ENCODE measurements at regions of chr6 and their contacts with region 1.

Region 1: DNA sequence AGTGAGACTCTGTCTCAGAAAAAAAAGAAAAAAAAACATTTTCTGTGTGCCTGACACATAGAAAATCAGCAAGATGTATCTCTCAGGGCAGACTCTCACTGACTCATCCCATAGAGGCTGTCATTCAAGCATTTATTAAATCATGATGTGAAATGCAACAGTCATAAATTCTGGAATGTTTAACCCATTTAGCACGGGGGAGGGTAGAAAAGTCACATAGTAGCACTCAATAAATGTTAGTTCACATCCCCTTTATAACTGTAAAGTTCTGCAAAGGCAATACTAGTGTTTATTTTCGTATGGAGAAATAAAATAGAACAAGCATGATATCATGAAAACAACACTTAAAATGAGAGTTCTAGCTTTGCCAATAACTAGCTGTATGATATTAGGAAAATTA is 15.5 kb upstream of the CARMIL1 start:
- DNase-seq: no peak
- ATAC-seq: no peak
- H3K4me3 Mint-ChIP-seq: no peak overlapping the region
- H3K27ac Mint-ChIP-seq: no peak overlapping the region
- H3K4me1 Mint-ChIP-seq: no peaks in the 10 kb centered on the region
- H3K27me3 Mint-ChIP-seq: peaks cover 6% of the 10 kb centered on the region

Region 2: DNA sequence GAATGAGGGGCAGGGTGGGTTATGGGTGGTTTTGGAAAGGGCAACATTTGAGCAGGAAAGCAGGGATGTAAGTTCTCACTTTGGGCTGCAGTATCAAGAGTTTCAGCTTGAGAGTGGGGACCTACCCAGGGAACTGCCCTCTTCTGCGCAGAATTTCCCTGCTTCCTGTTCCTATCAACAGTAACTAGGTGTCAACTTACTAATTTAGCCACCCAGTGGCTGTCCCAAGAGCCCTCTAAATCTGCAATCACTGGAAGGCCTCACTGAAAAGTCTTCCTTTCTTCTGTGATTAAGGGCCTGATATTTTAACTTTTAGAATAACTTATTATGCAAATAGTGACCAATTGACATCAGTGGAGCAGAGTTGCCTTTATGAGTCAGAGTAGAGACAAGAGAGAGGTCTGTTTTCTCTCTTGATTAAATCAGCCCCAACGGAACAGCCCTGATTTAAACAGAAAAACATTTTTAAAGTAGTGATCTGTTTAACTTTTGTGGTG is 209.7 kb before region 1 on chr6:
- CTCF ChIA-PET with region 1: no interaction called
- POLR2A ChIA-PET with region 1: no interaction called
- DNase-seq: no peak
- ATAC-seq: no peak
- H3K4me3 Mint-ChIP-seq: no peak overlapping the region
- H3K27ac Mint-ChIP-seq: peak overlapping the region; percentile 44
- H3K4me1 Mint-ChIP-seq: peaks cover 89% of the 10 kb centered on the region
- H3K27me3 Mint-ChIP-seq: no peaks in the 10 kb centered on the region

Region 3: GRCh38 chr6:25223490-25223991 is 40.1 kb before region 1 on chr6:
- CTCF ChIA-PET with region 1: interaction called, 16 read pairs
- POLR2A ChIA-PET with region 1: interaction called, 3 read pairs
- DNase-seq: peak; percentile 75
- ATAC-seq: peak; percentile 49
- H3K4me3 Mint-ChIP-seq: peak overlapping the region; percentile 52
- H3K27ac Mint-ChIP-seq: no peak overlapping the region
- H3K4me1 Mint-ChIP-seq: peaks cover 13% of the 10 kb centered on the region
- H3K27me3 Mint-ChIP-seq: peaks cover 10% of the 10 kb centered on the region

Region 4: DNA sequence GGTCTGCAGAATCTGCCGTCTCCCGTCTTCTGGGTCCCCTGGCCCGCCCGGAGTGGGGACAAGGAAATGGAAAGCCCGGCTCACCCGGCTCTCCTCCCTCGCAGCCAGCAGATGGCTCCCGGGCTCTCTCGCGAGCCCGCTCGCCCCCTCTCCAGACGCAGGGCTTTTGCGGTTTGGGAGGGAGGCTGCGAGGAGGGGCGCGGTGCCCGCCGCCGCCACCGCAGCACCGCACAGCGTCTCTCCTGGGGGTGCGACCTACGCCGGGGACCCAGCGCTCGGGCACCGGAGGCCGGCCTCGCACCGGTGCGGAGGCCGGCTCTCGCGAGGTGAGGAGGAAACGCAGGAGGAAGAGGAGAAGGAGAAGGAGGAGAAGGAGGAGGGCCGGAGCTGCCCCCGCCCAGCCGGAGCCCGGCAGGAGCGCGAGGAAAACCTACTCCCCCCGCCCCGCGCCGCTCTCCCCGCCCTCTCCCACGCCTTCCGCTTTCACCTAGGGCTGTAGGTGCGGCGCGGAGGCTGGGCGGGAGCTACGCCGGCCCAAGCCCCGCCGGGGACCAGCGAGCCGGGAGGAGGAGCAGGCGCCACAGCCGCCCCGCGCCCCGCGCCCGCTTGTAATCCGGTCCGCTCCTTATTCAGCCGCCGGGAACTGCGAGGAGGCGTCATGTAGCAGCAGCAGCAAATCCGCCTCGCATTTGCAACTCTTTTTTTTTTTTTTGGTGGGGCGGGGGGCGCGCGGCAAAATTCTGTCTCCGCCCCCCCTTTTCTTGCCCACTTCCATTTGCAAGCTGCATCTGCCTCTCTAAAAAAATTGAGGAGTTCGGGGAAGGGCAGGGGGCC is 15.5 kb after region 1 on chr6 and contains the start of gene CARMIL1:
- CTCF ChIA-PET with region 1: interaction called, 65 read pairs
- POLR2A ChIA-PET with region 1: no interaction called
- DNase-seq: peak; percentile 82
- ATAC-seq: peak; percentile 91
- H3K4me3 Mint-ChIP-seq: peak within 1 kb of the TSS; percentile 76
- H3K27ac Mint-ChIP-seq: peak within 1 kb of the TSS; percentile 48
- H3K4me1 Mint-ChIP-seq: peaks cover 20% of the 10 kb centered on the region
- H3K27me3 Mint-ChIP-seq: peaks cover 6% of the 10 kb centered on the region
- total RNA-seq, gene CARMIL1: 4.6 to 4.8 TPM

Region 5: GRCh38 chr6:25312703-25313501 is 49.2 kb after region 1 on chr6:
- CTCF ChIA-PET with region 1: interaction called, 14 read pairs
- POLR2A ChIA-PET with region 1: no interaction called
- DNase-seq: no peak
- ATAC-seq: no peak
- H3K4me3 Mint-ChIP-seq: no peak overlapping the region
- H3K27ac Mint-ChIP-seq: no peak overlapping the region
- H3K4me1 Mint-ChIP-seq: peaks cover 12% of the 10 kb centered on the region
- H3K27me3 Mint-ChIP-seq: no peaks in the 10 kb centered on the region

Region 6: GRCh38 chr6:25497383-25498040 is 233.9 kb after region 1 on chr6:
- CTCF ChIA-PET with region 1: interaction called, 116 read pairs
- POLR2A ChIA-PET with region 1: no interaction called
- DNase-seq: no peak
- ATAC-seq: no peak
- H3K4me3 Mint-ChIP-seq: no peak overlapping the region
- H3K27ac Mint-ChIP-seq: no peak overlapping the region
- H3K4me1 Mint-ChIP-seq: no peaks in the 10 kb centered on the region
- H3K27me3 Mint-ChIP-seq: no peaks in the 10 kb centered on the region

Region 7: DNA sequence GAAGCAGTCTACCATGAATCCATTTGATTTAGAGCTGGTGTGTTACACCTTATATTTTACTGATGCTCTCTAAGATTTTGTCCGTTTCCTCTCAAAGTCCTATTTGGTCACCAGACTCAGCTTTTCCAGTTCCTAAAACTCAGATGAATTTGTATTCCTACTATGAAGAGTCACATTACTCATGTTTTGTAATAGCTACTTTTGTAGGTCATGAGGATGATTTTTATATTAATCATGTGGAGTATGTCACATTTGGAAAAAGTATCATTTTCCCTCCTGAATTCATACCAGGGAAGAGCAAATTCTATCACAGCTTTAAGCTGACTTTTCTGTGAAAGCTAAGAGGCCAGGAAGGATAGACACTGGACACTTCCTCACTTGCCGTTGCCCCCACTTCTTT is 247.7 kb after region 1 on chr6:
- CTCF ChIA-PET with region 1: interaction called, 10 read pairs
- POLR2A ChIA-PET with region 1: interaction called, 3 read pairs
- DNase-seq: no peak
- ATAC-seq: no peak
- H3K4me3 Mint-ChIP-seq: no peak overlapping the region
- H3K27ac Mint-ChIP-seq: no peak overlapping the region
- H3K4me1 Mint-ChIP-seq: no peaks in the 10 kb centered on the region
- H3K27me3 Mint-ChIP-seq: no peaks in the 10 kb centered on the region

Region 8: DNA sequence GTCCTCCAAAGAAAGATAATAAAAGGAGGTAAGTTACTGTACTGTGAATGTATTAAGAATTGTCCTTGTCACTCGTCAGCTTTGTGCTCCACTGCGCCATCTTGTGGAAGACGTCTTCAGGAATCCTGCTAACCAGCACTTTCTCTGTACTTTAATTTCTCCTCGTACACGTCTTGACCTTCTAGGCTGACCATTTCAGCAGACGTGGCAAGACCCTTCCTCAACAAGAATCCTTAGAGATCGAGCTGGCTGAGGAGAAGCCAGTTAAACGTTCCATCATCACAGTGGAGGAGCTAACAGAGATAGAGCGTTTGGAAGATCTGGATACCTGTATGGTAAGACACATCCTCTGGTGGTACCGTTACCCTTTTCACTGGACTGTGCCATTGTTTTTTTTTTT is 292.9 kb after region 1 on chr6:
- CTCF ChIA-PET with region 1: interaction called, 50 read pairs
- POLR2A ChIA-PET with region 1: no interaction called
- DNase-seq: peak; percentile 85
- ATAC-seq: peak; percentile 71
- H3K4me3 Mint-ChIP-seq: no peak overlapping the region
- H3K27ac Mint-ChIP-seq: no peak overlapping the region
- H3K4me1 Mint-ChIP-seq: peaks cover 1% of the 10 kb centered on the region
- H3K27me3 Mint-ChIP-seq: no peaks in the 10 kb centered on the region